ENCODE measurements at regions of chr3 and their contacts with region 1.

Region 1: GRCh38 chr3:179702271-179702947 is 49.6 kb downstream of the USP13 start:
- DNase-seq: no peak
- H3K4me3 ChIP-seq: no peak overlapping the region
- H3K27ac ChIP-seq: no peak overlapping the region
- H3K4me1 ChIP-seq: no peaks in the 10 kb centered on the region
- H3K27me3 ChIP-seq: no peaks in the 10 kb centered on the region
- CTCF ChIP-seq: no peak
- EP300 ChIP-seq: no peak
- POLR2A ChIP-seq: no peak

Region 2: DNA sequence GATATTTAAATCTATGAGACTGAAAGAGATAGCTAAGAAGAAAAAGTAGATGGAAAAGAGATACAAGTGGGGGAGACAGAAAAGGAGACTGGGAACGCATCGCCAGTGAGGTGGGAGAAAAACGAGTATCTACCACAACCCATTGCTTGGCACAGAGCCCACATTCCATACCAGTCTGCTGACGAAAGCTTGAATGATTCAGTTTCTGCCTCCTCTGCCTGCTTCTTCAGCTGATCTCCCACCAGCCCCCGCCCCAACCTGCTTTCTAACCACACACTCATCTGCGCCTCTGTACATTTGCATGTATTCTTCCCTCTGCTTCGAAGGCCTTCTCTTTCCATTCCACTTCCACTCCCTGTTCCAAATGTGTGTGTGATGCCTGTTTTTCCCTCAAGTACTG is 138.6 kb after region 1 on chr3:
- in situ Hi-C with region 1: no loop called
- intact Hi-C with region 1: no loop called
- DNase-seq: no peak
- H3K4me3 ChIP-seq: no peak overlapping the region
- H3K27ac ChIP-seq: no peak overlapping the region
- H3K4me1 ChIP-seq: no peaks in the 10 kb centered on the region
- H3K27me3 ChIP-seq: no peaks in the 10 kb centered on the region
- CTCF ChIP-seq: no peak
- EP300 ChIP-seq: no peak
- POLR2A ChIP-seq: no peak

Region 3: DNA sequence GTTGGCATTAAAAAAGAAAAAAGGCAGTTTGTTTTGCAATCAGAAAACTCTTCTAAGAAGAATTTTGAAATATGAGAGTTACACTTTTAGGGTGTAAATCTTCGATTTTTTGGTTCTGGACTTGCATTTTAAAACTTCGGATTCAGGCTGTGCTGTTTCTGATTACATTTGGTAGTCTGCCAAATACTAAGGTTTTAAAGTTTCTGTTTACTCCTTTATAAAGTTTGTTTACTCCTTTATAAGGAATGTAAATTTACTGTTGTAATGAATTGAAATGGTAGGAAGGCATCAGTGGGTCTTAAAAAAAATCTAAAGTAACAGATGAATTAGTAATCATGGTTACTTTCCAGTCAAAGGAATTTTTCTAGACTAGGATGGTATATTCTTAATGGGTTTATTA is 1224.1 kb after region 1 on chr3:
- in situ Hi-C with region 1: no loop called
- intact Hi-C with region 1: loop called (anchors 5 kb)
- DNase-seq: no peak
- H3K4me3 ChIP-seq: no peak overlapping the region
- H3K27ac ChIP-seq: no peak overlapping the region
- H3K4me1 ChIP-seq: peaks cover 0 to 38% (median 9%) of the 10 kb centered on the region in 4 donors
- H3K27me3 ChIP-seq: no peaks in the 10 kb centered on the region
- CTCF ChIP-seq: no peak
- EP300 ChIP-seq: no peak
- POLR2A ChIP-seq: no peak

Measured in transverse colon (tissue), 4 donors.